ENCODE measurements at regions of chr11 and their contacts with region 1.

Region 1: DNA sequence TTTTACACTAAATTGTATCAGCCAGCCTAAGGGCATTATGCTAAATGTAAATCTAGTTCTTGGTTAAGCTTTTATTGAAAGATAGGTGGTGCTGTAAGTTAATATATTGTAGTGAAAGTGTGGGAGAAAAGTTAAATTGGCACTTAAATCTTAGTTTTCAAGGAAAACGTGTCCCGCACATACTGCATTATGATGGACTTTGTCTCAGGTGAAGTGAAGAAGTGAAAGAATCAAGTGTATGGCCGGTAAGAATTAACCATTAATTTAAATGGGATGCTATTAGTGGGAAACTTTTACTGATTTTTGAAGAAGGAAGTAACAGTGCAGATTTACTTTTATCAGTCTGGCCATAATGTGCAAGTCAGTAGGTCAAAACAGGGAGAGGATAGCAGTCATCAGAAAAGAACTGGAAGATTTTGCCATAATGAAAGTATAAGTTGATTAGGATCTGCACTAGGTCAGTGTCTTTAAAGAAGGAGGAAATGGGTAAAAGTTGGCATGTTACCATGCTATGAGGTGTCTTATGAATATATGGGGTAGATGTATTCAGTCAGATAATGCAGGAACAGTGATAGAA is 81.6 kb downstream of the PDHX start:
- DNase-seq: peak in 1 of 2 donors; percentile 54
- ATAC-seq: peak in 2 of 3 donors; percentile 53 to 63
- H3K4me3 ChIP-seq: no peak overlapping the region
- H3K4me3 Mint-ChIP-seq: no peak overlapping the region
- H3K27ac ChIP-seq: peak overlapping the region; percentile 15
- H3K27ac Mint-ChIP-seq: peak overlapping the region; percentile 8 to 56
- H3K4me1 ChIP-seq: no peaks in the 10 kb centered on the region
- H3K4me1 Mint-ChIP-seq: peaks cover 6 to 7% of the 10 kb centered on the region in 2 donors
- H3K27me3 ChIP-seq: no peaks in the 10 kb centered on the region
- H3K27me3 Mint-ChIP-seq: no peaks in the 10 kb centered on the region
- CTCF ChIP-seq: peak; percentile 91

Region 2: DNA sequence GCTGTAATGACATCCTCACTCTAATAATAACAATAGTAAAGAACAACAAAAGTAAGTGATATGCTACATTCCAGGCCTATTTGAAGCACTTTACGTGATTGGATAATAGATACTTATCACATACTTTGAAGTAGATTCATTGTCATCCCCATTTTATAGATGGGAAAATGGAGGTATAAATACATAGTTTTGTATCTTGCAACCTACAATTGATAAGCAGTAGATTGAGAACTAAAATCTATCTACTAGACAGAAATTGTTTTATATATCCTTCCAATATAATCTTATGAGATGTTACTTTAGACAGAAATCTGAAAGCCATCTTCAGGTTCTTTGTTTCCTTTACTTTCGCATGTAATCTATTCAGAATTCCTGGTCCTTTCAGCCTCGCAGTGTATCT is 36.4 kb after region 1 on chr11:
- intact Hi-C with region 1: no loop called
- DNase-seq: no peak
- ATAC-seq: no peak
- H3K4me3 ChIP-seq: no peak overlapping the region
- H3K4me3 Mint-ChIP-seq: no peak overlapping the region
- H3K27ac ChIP-seq: no peak overlapping the region
- H3K27ac Mint-ChIP-seq: no peak overlapping the region
- H3K4me1 ChIP-seq: peaks cover 8% of the 10 kb centered on the region
- H3K4me1 Mint-ChIP-seq: peaks cover 6 to 22% of the 10 kb centered on the region in 2 donors
- H3K27me3 ChIP-seq: no peaks in the 10 kb centered on the region
- H3K27me3 Mint-ChIP-seq: peaks cover 8% of the 10 kb centered on the region in 2 donors
- CTCF ChIP-seq: no peak

Region 3: DNA sequence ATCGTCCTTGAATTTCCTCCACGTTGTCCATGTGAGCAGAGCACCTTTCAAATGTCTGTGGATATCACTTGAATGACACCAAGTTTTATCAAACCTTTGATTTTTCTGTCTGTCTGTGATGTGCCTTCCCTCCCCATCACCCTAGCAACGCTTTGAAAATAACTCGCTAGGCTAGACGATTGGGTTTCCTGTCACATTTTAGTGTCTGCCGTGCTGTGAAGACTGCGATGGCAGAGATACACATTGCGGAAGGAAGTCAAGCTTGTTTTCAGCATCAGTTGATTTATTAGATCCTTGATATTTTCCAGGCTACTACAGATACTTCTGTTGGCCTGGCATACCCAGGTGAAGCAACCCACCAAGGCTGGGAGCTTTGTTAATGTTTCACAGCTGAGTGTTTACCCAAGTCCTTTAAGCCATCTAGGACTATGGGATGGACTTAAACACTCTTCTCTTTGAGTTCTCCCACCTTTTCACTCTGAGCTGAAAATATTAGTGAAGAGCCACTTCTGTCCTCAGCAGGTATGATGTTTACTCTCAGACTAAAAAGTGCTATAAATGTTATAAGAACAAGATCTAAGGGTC is 47.3 kb after region 1 on chr11:
- intact Hi-C with region 1: loop called (anchors 5 kb)
- DNase-seq: peak; percentile 59 to 97
- ATAC-seq: peak; percentile 69 to 90 (median 82)
- H3K4me3 ChIP-seq: no peak overlapping the region
- H3K4me3 Mint-ChIP-seq: peak overlapping the region; percentile 79
- H3K27ac ChIP-seq: peak overlapping the region; percentile 93
- H3K27ac Mint-ChIP-seq: peak overlapping the region; percentile 96 to 98
- H3K4me1 ChIP-seq: peaks cover 50% of the 10 kb centered on the region
- H3K4me1 Mint-ChIP-seq: peaks cover 59 to 65% of the 10 kb centered on the region in 2 donors
- H3K27me3 ChIP-seq: no peaks in the 10 kb centered on the region
- H3K27me3 Mint-ChIP-seq: peaks cover 2 to 4% of the 10 kb centered on the region in 2 donors
- CTCF ChIP-seq: no peak

Region 4: GRCh38 chr11:35144136-35144741 is 146.2 kb after region 1 on chr11:
- intact Hi-C with region 1: loop called (anchors 5 kb)
- DNase-seq: peak; percentile 46 to 86
- ATAC-seq: peak; percentile 49 to 71 (median 59)
- H3K4me3 ChIP-seq: peak overlapping the region; percentile 12
- H3K4me3 Mint-ChIP-seq: peak overlapping the region; percentile 83
- H3K27ac ChIP-seq: peak overlapping the region; percentile 80
- H3K27ac Mint-ChIP-seq: peak overlapping the region; percentile 86 to 88
- H3K4me1 ChIP-seq: peaks cover 80% of the 10 kb centered on the region
- H3K4me1 Mint-ChIP-seq: peaks cover 87 to 92% of the 10 kb centered on the region in 2 donors
- H3K27me3 ChIP-seq: no peaks in the 10 kb centered on the region
- H3K27me3 Mint-ChIP-seq: no peaks in the 10 kb centered on the region
- CTCF ChIP-seq: no peak

Region 5: GRCh38 chr11:35207471-35208403 is 209.7 kb after region 1 on chr11:
- intact Hi-C with region 1: no loop called
- DNase-seq: no peak
- ATAC-seq: no peak
- H3K4me3 ChIP-seq: no peak overlapping the region
- H3K4me3 Mint-ChIP-seq: no peak overlapping the region
- H3K27ac ChIP-seq: no peak overlapping the region
- H3K27ac Mint-ChIP-seq: peak overlapping the region in 1 of 2 donors; percentile 16
- H3K4me1 ChIP-seq: no peaks in the 10 kb centered on the region
- H3K4me1 Mint-ChIP-seq: peaks cover 0 to 10% of the 10 kb centered on the region in 2 donors
- H3K27me3 ChIP-seq: no peaks in the 10 kb centered on the region
- H3K27me3 Mint-ChIP-seq: no peaks in the 10 kb centered on the region
- CTCF ChIP-seq: no peak

Region 6: GRCh38 chr11:35237860-35238715 is 240.0 kb after region 1 on chr11:
- intact Hi-C with region 1: loop called (anchors 1 kb)
- DNase-seq: peak in 1 of 2 donors; percentile 86
- ATAC-seq: peak in 2 of 3 donors; percentile 56 to 58
- H3K4me3 ChIP-seq: no peak overlapping the region
- H3K4me3 Mint-ChIP-seq: no peak overlapping the region
- H3K27ac ChIP-seq: no peak overlapping the region
- H3K27ac Mint-ChIP-seq: no peak overlapping the region
- H3K4me1 ChIP-seq: peaks cover 30% of the 10 kb centered on the region
- H3K4me1 Mint-ChIP-seq: peaks cover 45 to 47% of the 10 kb centered on the region in 2 donors
- H3K27me3 ChIP-seq: no peaks in the 10 kb centered on the region
- H3K27me3 Mint-ChIP-seq: peaks cover 3 to 13% of the 10 kb centered on the region in 2 donors
- CTCF ChIP-seq: peak; percentile 87

Region 7: DNA sequence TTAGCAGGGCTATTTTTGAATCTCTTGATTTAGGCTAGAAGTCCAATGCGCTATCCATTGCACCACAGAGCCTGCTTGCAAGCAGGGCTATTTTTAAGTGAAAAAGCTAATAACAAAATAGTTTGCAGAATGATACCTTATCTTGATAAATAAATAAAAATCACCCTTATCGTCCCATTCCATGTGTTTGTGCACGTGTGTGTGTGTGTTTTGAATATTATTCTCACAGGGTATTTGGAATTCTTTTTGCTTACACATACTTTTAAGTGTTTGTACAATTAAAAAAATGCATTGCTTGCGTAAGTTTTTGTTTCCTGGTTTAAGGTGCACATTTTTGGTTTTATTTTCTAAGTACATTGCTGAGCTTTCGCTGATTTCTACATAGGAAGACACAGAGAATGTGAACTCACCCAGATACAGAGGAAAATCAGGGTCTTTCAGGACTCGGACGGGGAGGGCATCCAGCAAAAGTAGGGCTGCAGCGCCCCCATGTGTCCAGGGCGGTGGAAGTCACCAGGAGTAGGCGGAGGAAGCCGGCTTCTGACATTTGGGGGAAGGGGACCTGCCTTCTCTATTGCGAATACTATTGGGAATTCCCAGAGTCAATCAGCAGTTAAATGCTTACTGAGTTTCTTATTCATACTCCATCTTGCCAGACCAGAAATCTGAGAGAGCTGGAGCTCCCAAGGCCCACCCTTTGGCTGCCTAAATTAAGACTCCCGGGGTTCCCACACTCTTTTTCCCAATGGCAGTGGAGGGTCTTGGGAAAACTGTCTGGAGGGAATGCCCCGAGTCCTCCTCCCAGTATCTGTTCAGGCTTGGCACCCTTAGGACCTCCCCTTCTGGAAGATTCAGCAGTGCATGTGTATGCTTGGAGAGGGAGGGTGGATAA is 394.1 kb after region 1 on chr11:
- intact Hi-C with region 1: loop called (anchors 2 kb)
- DNase-seq: peak; percentile 73 to 90
- ATAC-seq: peak; percentile 70 to 90 (median 84)
- H3K4me3 ChIP-seq: no peak overlapping the region
- H3K4me3 Mint-ChIP-seq: no peak overlapping the region
- H3K27ac ChIP-seq: no peak overlapping the region
- H3K27ac Mint-ChIP-seq: no peak overlapping the region
- H3K4me1 ChIP-seq: no peaks in the 10 kb centered on the region
- H3K4me1 Mint-ChIP-seq: peaks cover 5% of the 10 kb centered on the region in 2 donors
- H3K27me3 ChIP-seq: no peaks in the 10 kb centered on the region
- H3K27me3 Mint-ChIP-seq: peaks cover 14 to 16% of the 10 kb centered on the region in 2 donors
- CTCF ChIP-seq: peak; percentile 92